GM12878 (cell line): ENCODE measurements at regions of chr2 and their contacts with region 1.

Region 1: DNA sequence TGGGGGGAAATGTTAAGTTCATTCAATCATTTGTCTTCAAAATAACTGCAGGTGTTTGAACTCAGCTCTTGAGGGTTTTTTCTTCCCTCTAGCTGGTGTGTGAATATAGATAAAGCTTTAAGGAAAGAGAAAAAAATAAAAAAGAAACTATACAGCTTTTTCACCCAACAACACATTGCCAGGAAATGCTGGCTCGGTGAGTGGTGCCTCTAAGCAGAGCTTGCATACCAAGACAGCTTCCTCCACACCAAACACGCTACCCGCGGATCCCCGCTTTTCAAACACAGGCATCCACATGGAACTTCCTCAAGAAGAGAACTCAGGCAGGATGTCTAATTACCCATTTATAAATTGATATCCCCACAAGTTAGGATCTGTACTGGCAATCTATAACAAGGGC is 69.8 kb upstream of the TANK start:
- DNase-seq: no peak
- ATAC-seq: peak; percentile 59
- H3K4me3 ChIP-seq: no peak overlapping the region
- H3K27ac ChIP-seq: peak overlapping the region; percentile 63
- H3K4me1 ChIP-seq: peaks cover 36% of the 10 kb centered on the region
- H3K27me3 ChIP-seq: no peaks in the 10 kb centered on the region
- CTCF ChIP-seq: no peak
- EP300 ChIP-seq: no peak
- POLR2A ChIP-seq: 0 out of 2 replicates have a peak, but pooled peaks have one; percentile 37
- RAD21 ChIP-seq: no peak

Region 2: DNA sequence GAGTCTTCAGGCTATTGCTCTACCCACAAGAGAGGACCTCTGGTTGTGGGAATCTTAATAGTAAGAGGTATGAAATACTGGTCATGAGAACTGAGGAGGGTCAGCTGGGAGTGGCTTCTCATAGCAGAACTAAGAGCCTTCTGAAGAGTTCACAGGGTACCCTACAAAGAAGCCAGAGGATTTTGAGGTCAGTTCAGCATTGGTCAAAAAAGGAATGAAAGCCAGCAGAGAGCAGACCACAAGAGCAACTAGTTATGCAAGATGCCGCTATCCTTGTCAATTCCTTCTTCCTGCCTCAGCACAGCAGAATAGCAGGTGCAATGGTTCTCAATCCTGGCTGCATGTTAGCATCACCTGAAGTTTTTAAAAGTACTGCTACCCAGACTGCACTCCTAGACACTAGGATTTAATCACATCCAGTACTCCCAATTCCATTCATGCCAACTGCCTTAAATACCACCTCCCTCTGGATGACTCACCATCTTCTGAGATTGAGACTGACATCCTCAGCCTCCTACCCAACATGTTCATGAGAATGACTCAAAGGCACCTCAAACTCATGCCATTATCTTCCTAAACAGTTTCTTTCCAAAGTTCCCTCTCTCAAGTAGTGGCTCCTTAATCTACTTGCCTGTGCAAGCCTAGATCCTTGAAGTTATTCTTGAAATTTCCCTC is 515.8 kb before region 1 on chr2:
- CTCF ChIA-PET with region 1: no interaction called
- POLR2A ChIA-PET with region 1: no interaction called
- RAD21 ChIA-PET with region 1: no interaction called
- SMC1A ChIA-PET with region 1: no interaction called
- in situ Hi-C with region 1: no loop called
- intact Hi-C with region 1: no loop called
- DNase-seq: no peak
- ATAC-seq: no peak
- H3K4me3 ChIP-seq: no peak overlapping the region
- H3K27ac ChIP-seq: no peak overlapping the region
- H3K4me1 ChIP-seq: no peaks in the 10 kb centered on the region
- H3K27me3 ChIP-seq: no peaks in the 10 kb centered on the region
- CTCF ChIP-seq: no peak
- EP300 ChIP-seq: no peak
- POLR2A ChIP-seq: no peak
- RAD21 ChIP-seq: no peak

Region 3: GRCh38 chr2:161077367-161078210 is 12.8 kb before region 1 on chr2:
- CTCF ChIA-PET with region 1: interaction called, 13 read pairs
- POLR2A ChIA-PET with region 1: interaction called, 22 read pairs
- RAD21 ChIA-PET with region 1: interaction called, 23 read pairs
- SMC1A ChIA-PET with region 1: interaction called, 89 read pairs
- in situ Hi-C with region 1: no loop called
- intact Hi-C with region 1: loop called (anchors 1 kb)
- DNase-seq: peak; percentile 81
- ATAC-seq: peak; percentile 90
- H3K4me3 ChIP-seq: no peak overlapping the region
- H3K27ac ChIP-seq: peak overlapping the region; percentile 71
- H3K4me1 ChIP-seq: peaks cover 20% of the 10 kb centered on the region
- H3K27me3 ChIP-seq: no peaks in the 10 kb centered on the region
- CTCF ChIP-seq: no peak
- EP300 ChIP-seq: peak; percentile 70 to 74
- POLR2A ChIP-seq: no peak
- RAD21 ChIP-seq: 0 out of 2 replicates have a peak, but pooled peaks have one; percentile 5

Region 4: DNA sequence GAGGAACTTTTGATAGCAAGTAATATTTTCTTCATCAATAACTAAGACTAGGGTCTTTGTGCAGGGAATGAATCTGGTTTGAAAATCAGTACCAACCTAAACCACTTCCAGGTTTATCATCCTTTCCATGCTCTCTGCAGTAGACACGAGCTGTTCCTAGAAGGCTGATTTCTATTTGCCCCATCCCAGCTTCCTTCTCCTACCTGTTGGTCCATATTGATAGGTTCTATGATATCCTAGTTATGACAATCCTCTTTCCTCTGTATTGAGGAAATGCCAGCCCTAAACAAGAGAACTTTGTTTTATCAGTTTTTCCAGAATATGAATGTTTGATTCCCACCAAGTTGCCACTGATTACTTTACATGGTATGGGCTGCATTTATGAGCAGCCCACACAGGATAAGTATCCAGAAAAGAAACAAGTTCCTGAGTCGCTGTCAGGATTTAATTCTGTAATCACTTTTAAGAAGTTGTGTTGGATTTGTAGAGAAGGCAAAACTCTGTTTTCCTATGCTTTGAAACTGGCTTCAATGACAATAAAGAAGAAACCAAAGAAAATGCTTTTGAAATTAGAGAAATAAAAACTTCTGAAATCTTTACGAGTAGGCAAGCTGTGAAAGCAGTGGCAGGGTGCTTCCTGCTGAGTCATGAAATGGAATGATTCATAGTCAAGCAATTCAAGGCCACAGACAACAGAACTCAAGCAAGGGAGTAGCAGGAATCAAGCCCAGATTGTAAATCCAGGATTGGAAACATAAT is 32.5 kb after region 1 on chr2:
- CTCF ChIA-PET with region 1: interaction called, 8 read pairs
- POLR2A ChIA-PET with region 1: interaction called, 4 read pairs
- RAD21 ChIA-PET with region 1: interaction called, 6 read pairs
- SMC1A ChIA-PET with region 1: interaction called, 30 read pairs
- in situ Hi-C with region 1: no loop called
- intact Hi-C with region 1: no loop called
- DNase-seq: no peak
- ATAC-seq: peak; percentile 81
- H3K4me3 ChIP-seq: no peak overlapping the region
- H3K27ac ChIP-seq: no peak overlapping the region; the same call in 1 of the 2 replicates
- H3K4me1 ChIP-seq: no peaks in the 10 kb centered on the region
- H3K27me3 ChIP-seq: no peaks in the 10 kb centered on the region
- CTCF ChIP-seq: no peak
- EP300 ChIP-seq: no peak
- POLR2A ChIP-seq: no peak
- RAD21 ChIP-seq: no peak

Region 5: GRCh38 chr2:161152302-161152701 is 61.9 kb after region 1 on chr2:
- CTCF ChIA-PET with region 1: interaction called, 4 read pairs
- POLR2A ChIA-PET with region 1: interaction called, 6 read pairs
- RAD21 ChIA-PET with region 1: interaction called, 3 read pairs
- SMC1A ChIA-PET with region 1: interaction called, 12 read pairs
- in situ Hi-C with region 1: no loop called
- intact Hi-C with region 1: no loop called
- DNase-seq: no peak
- ATAC-seq: no peak
- H3K4me3 ChIP-seq: no peak overlapping the region
- H3K27ac ChIP-seq: no peak overlapping the region
- H3K4me1 ChIP-seq: peaks cover 3% of the 10 kb centered on the region
- H3K27me3 ChIP-seq: no peaks in the 10 kb centered on the region
- CTCF ChIP-seq: no peak
- EP300 ChIP-seq: no peak
- POLR2A ChIP-seq: no peak
- RAD21 ChIP-seq: no peak

Region 6: DNA sequence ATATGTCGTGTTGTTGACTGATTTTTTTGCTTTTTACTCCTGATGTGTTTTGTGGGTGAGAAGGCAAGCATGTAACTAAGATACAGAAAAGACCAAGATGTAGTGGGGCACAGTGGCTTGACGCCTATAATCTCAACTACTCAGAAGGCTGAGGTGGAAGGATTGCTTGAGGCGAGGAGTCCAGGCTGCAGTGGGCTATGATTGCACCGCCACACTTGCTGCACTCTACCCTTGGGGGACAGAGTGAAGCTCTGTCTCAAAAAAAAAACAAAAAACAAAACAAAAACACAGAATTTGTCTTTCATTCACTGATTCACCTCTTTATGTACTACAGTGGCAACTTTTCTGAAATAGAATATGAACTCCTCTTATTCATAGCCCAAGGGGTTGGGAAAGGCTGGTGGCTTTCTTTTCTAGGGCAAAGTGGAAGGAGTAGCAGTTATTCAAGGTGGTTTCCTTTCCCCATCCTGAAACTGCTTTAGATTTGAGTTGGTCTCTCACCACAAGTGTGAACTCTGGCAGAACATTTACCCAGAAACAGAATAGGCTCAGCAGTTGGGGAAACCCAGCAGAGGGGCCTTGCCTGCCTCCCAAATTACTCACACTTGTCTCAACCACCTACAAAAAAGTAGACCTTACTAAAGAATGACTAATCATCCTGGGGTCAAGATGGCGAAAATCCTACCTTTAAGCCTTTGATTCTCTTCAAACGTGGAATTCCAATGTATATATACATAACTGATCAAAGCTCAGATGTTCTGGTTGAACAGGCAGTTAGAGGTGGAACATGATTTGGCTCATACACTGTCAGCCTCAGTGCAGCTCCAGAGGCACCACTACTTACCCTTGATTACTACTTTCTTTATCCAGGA is 76.4 kb after region 1 on chr2:
- CTCF ChIA-PET with region 1: interaction called, 3 read pairs
- POLR2A ChIA-PET with region 1: interaction called, 5 read pairs
- RAD21 ChIA-PET with region 1: interaction called, 13 read pairs
- SMC1A ChIA-PET with region 1: interaction called, 10 read pairs
- in situ Hi-C with region 1: no loop called
- intact Hi-C with region 1: loop called (anchors 2 kb)
- DNase-seq: peak; percentile 95
- ATAC-seq: peak; percentile 77
- H3K4me3 ChIP-seq: peak overlapping the region; percentile 35; the same call in 1 of the 2 replicates
- H3K27ac ChIP-seq: peak overlapping the region; percentile 89
- H3K4me1 ChIP-seq: peaks cover 56% of the 10 kb centered on the region
- H3K27me3 ChIP-seq: no peaks in the 10 kb centered on the region
- CTCF ChIP-seq: no peak
- EP300 ChIP-seq: peak; percentile 91 to 96
- POLR2A ChIP-seq: no peak
- RAD21 ChIP-seq: no peak